HepG2 (cell line): ENCODE measurements at regions of chr16 and their contacts with region 1.

Region 1: GRCh38 chr16:53061701-53062159 is 6.9 kb downstream of the CHD9 start:
- DNase-seq: peak; percentile 70
- ATAC-seq: peak; percentile 92
- H3K4me3 ChIP-seq: peak overlapping the region in 1 of 3 experiments; percentile 11; a peak in 1 of 6 replicates
- H3K27ac ChIP-seq: peak overlapping the region; percentile 10
- H3K4me1 ChIP-seq: peaks cover 73% of the 10 kb centered on the region
- H3K27me3 ChIP-seq: no peaks in the 10 kb centered on the region
- CTCF ChIP-seq: 0 out of 2 replicates have a peak, but pooled peaks have one; percentile 19
- EP300 ChIP-seq: peak in 1 of 2 experiments; percentile 37; a peak in 1 of 4 replicates
- POLR2A ChIP-seq: no peak
- RAD21 ChIP-seq: no peak

Region 2: GRCh38 chr16:52953215-52953614 is 108.5 kb before region 1 on chr16:
- CTCF ChIA-PET with region 1: no interaction called
- POLR2A ChIA-PET with region 1: no interaction called
- in situ Hi-C with region 1: no loop called
- intact Hi-C with region 1: no loop called
- DNase-seq: no peak
- ATAC-seq: no peak
- H3K4me3 ChIP-seq: no peak overlapping the region
- H3K27ac ChIP-seq: no peak overlapping the region
- H3K4me1 ChIP-seq: no peaks in the 10 kb centered on the region
- H3K27me3 ChIP-seq: no peaks in the 10 kb centered on the region; a peak in 1 of 5 replicates
- CTCF ChIP-seq: no peak
- EP300 ChIP-seq: no peak
- POLR2A ChIP-seq: no peak
- RAD21 ChIP-seq: no peak

Region 3: GRCh38 chr16:53078765-53079485 is 17.2 kb after region 1 on chr16:
- CTCF ChIA-PET with region 1: no interaction called
- POLR2A ChIA-PET with region 1: no interaction called
- in situ Hi-C with region 1: no loop called
- intact Hi-C with region 1: loop called (anchors 2 kb)
- DNase-seq: no peak
- ATAC-seq: no peak
- H3K4me3 ChIP-seq: no peak overlapping the region
- H3K27ac ChIP-seq: no peak overlapping the region
- H3K4me1 ChIP-seq: peaks cover 13% of the 10 kb centered on the region
- H3K27me3 ChIP-seq: no peaks in the 10 kb centered on the region
- CTCF ChIP-seq: no peak
- EP300 ChIP-seq: no peak
- POLR2A ChIP-seq: no peak
- RAD21 ChIP-seq: no peak